GM10248 (cell line): ENCODE measurements at regions of chr2 and their contacts with region 1.

Region 1: GRCh38 chr2:18387441-18388206 is 172.8 kb downstream of the RDH14 start:
- DNase-seq: peak; percentile 56
- CTCF ChIP-seq: peak; percentile 92

Region 2: DNA sequence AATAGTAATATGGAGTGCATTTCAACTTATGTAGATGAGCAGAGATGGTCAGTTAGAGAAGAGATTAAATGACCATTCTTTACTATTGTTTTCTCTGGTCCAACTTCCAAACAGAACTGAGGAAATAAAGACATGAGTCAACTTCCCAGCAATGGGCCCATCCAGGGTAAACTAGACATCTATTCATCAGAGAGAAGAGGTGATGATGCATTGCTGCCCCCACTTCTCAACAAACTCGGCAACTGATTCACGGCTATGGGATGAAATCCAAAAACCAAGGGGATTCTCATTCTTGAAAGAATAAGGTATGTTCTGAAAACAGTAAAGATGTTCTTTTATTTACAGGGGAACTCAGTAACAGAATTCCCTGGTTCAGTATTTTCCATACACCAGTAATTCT is 17.9 kb before region 1 on chr2:
- CTCF ChIA-PET with region 1: interaction called, 16 read pairs
- POLR2A ChIA-PET with region 1: no interaction called
- DNase-seq: no peak
- CTCF ChIP-seq: no peak